Endothelial cell of umbilical vein (primary cell): ENCODE measurements at regions of chr4 and their contacts with region 1.

Region 1: GRCh38 chr4:144627663-144628076 is 18.3 kb upstream of the HHIP start:
- DNase-seq: peak; percentile 96
- H3K4me3 ChIP-seq: no peak overlapping the region
- H3K27ac ChIP-seq: peak overlapping the region; percentile 99
- H3K4me1 ChIP-seq: peaks cover 36% of the 10 kb centered on the region
- H3K27me3 ChIP-seq: no peaks in the 10 kb centered on the region
- CTCF ChIP-seq: no peak
- POLR2A ChIP-seq: peak; percentile 83

Region 2: DNA sequence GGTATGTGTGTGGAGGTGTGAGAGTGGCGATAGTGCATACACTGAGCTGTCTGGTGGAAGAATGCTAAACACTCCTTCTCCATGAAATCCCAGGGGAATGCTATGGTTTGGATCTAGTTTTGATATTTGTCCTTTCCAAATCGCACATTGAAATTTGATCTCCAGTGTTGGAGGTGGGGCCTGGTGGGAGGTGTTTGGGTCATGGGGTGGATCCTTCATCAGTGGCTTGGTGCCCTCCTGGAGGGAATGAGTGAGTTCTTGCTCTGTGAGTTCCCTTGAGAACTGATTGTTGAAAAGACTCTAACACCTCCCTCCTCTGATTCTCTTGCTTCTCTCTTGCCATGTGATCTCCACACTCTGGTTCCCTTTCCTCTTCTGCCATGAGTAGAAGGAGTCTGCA is 95.8 kb before region 1 on chr4:
- CTCF ChIA-PET with region 1: no interaction called
- POLR2A ChIA-PET with region 1: no interaction called
- dilution Hi-C with region 1: no loop called
- intact Hi-C with region 1: no loop called
- DNase-seq: no peak
- H3K4me3 ChIP-seq: no peak overlapping the region
- H3K27ac ChIP-seq: no peak overlapping the region
- H3K4me1 ChIP-seq: no peaks in the 10 kb centered on the region
- H3K27me3 ChIP-seq: no peaks in the 10 kb centered on the region
- CTCF ChIP-seq: no peak
- POLR2A ChIP-seq: no peak

Region 3: DNA sequence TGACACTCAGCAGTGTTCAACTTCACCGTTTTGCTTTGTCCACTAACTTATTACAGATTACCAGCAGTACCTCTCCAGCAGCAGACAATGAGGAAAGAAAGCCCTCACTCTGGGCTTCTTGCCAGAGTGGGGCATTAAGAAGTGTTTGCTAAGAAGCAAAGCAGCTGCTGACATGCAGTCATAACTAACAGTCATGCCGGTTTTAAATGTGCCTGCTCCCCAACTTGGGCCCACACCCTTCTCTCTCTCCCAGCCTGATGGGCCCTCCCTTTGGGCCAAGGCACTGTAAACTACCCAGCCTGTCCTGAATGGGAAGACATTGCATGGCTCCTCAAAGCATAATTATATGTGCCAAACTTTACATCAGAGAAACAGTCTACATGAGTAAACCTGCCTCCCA is 36.3 kb before region 1 on chr4:
- CTCF ChIA-PET with region 1: no interaction called
- POLR2A ChIA-PET with region 1: no interaction called
- dilution Hi-C with region 1: no loop called
- intact Hi-C with region 1: loop called (anchors 1 kb)
- DNase-seq: peak; percentile 86
- H3K4me3 ChIP-seq: no peak overlapping the region
- H3K27ac ChIP-seq: peak overlapping the region; percentile 59
- H3K4me1 ChIP-seq: peaks cover 39% of the 10 kb centered on the region
- H3K27me3 ChIP-seq: no peaks in the 10 kb centered on the region
- CTCF ChIP-seq: no peak
- POLR2A ChIP-seq: no peak